ENCODE measurements at regions of chr11 and their contacts with region 1.

Region 1: DNA sequence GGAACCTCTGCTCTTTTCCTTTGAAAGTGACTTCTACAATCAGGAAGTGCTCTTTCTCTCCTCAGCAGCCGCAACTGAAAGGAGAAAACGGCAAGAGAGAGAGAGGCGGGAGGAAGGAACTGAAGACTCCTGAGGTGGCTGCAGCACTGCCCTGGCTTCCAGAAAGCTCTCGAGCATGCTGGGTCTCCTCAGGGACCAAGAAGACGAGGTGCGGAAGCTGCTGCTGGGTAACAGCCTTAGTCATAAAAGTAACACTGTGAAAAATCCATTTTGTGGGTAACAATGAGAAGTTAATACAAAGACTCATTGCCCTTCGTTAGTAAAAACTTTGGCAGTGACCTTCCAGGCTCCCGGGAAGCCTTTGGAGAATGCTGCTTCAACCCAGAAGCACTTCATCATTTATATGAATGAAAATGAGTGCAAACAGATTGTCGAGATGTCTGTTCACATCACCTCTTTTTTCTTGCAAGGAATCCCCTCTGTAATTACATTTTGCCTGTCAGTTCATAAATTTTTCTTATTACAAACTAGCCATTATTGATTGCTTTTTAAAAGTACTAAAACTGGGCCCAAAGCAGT is 473.4 kb downstream of the SOX6 start:
- DNase-seq: no peak
- ATAC-seq: no peak
- H3K4me3 ChIP-seq: no peak overlapping the region
- H3K27ac ChIP-seq: no peak overlapping the region
- H3K4me1 ChIP-seq: no peaks in the 10 kb centered on the region
- H3K27me3 ChIP-seq: no peaks in the 10 kb centered on the region
- CTCF ChIP-seq: no peak
- EP300 ChIP-seq: no peak
- POLR2A ChIP-seq: no peak
- RAD21 ChIP-seq: no peak

Region 2: GRCh38 chr11:15955595-15955994 is 72.6 kb after region 1 on chr11:
- CTCF ChIA-PET with region 1: no interaction called
- POLR2A ChIA-PET with region 1: interaction called, 13 read pairs
- RAD21 ChIA-PET with region 1: no interaction called
- SMC1A ChIA-PET with region 1: no interaction called
- in situ Hi-C with region 1: no loop called
- intact Hi-C with region 1: no loop called
- DNase-seq: no peak
- ATAC-seq: no peak
- H3K4me3 ChIP-seq: no peak overlapping the region
- H3K27ac ChIP-seq: no peak overlapping the region
- H3K4me1 ChIP-seq: no peaks in the 10 kb centered on the region
- H3K27me3 ChIP-seq: no peaks in the 10 kb centered on the region; a peak in 1 of 4 replicates
- CTCF ChIP-seq: no peak
- EP300 ChIP-seq: no peak
- POLR2A ChIP-seq: no peak
- RAD21 ChIP-seq: no peak

Measured in GM12878 (cell line).